ENCODE measurements at regions of chr9 and their contacts with region 1.

Region 1: DNA sequence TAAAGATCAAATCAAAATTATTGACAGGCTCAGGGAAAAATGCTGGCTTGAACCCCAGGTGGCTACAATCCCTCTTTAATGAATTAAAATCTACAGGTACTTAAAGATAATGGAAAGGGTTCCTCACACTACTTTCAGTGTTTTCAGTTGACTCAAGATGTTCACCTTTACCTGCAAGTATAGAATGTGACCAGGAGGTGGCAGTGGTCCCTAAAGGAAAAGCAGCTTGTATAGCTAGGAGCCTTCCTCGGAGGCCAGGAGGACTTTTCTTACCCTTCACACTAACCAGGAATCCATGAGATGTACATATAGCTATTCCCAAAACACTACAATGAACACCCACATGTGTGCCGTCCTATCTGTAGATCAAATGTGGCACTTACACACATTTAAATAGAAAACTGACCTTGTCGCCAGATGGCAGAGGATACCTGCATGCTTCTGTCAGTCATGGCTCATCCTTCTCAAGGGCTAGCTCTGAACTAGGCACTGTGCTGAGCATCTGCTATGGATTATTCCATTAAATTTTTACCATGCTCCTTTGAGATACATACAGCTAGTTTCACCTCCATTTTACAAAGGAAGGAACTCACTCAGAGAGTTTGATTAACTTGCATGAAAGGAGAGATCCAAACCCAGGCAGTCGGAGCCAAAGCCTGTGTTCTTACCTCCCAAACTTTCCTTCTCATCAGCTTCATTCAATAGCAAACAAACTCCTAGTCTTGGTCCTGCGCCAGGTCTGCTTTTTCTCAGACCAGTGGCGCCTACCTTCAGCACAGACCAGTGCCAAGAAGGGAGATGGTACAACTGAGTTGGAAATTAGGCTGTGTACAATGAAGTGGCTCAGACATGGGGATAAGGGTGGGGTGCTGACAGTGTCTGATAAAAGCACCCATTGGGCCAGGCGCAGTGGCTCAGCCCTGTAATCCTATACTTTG is 24.5 kb downstream of the C9orf152 start:
- DNase-seq: peak; percentile 73
- H3K4me3 Mint-ChIP-seq: no peak overlapping the region
- H3K27ac Mint-ChIP-seq: no peak overlapping the region
- H3K4me1 Mint-ChIP-seq: peaks cover 14% of the 10 kb centered on the region
- H3K27me3 Mint-ChIP-seq: peaks cover 4% of the 10 kb centered on the region

Region 2: DNA sequence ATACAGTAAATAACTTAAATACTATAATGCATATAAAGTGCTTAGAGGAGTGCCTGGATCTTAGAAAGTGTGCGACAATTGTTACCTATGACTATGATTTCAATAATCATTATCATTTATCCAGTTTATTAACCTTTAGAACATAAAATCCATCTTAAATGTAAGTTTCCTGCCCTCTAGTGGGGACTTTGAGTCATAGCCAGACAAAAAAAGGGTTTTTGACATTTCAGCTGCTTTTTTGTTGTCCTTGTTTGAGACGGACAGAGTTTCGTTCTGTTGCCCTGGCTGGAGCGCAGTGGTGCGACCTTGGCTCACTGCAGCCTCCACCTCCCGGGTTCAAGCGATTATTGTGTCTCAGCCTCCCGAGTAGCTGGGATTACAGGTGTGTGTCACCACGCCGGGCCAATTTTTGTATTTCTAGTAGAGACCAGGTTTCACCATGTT is 34.2 kb after region 1 on chr9:
- CTCF ChIA-PET with region 1: interaction called, 59 read pairs
- DNase-seq: no peak
- H3K4me3 Mint-ChIP-seq: no peak overlapping the region
- H3K27ac Mint-ChIP-seq: no peak overlapping the region
- H3K4me1 Mint-ChIP-seq: peaks cover 11% of the 10 kb centered on the region
- H3K27me3 Mint-ChIP-seq: peaks cover 25% of the 10 kb centered on the region

Region 3: GRCh38 chr9:110623462-110624025 is 440.1 kb after region 1 on chr9:
- CTCF ChIA-PET with region 1: interaction called, 11 read pairs
- DNase-seq: peak; percentile 26
- H3K4me3 Mint-ChIP-seq: no peak overlapping the region
- H3K27ac Mint-ChIP-seq: no peak overlapping the region
- H3K4me1 Mint-ChIP-seq: no peaks in the 10 kb centered on the region
- H3K27me3 Mint-ChIP-seq: no peaks in the 10 kb centered on the region

Measured in activated naive CD4-positive, alpha-beta T cell treated with anti-CD3 and anti-CD28 coated beads, Interleukin-2, amount 10 ng/mL, durations not matched to agents 7 days and 5 days (primary cell).